CD8-positive, alpha-beta T cell (primary cell): ENCODE measurements at regions of chr16 and their contacts with region 1.

Region 1: DNA sequence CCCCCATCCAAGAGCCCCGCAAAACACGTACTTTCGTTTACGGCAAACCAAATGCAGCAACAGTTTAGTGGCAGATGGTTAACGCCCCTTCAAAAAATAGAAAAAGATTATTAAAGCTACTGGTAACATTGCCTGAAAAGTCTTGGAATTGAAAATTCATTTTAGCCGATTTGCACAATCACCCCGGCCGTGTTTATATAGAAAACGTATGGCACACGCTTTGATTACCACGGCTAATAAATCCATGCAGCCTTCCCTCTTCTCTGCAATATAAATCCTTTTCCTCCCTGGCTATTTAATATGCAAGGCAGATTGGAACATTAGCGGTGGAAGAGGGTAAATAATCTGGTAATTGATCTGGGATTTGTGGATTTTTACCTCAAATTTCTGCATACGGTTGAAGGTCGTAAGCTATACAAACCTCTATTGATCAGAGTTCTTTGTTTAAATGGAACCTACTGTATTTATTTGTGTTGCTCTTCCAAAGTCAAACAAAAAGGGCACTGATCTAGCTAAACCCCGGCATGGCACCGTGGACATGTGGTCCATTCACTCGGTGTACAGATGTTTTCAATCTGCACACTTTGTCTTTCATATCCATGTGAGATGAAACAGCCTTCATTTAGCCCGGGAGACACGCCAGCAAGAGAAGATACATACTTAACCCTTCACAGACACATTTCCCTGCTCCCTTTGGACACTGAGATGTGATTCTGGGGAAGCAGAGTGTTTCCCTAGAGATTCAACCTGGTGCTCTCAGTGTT is 238.1 kb upstream of the MAF start:
- DNase-seq: no peak
- ATAC-seq: no peak
- H3K4me3 ChIP-seq: no peak overlapping the region
- H3K4me3 Mint-ChIP-seq: no peak overlapping the region
- H3K27ac ChIP-seq: no peak overlapping the region
- H3K27ac Mint-ChIP-seq: no peak overlapping the region
- H3K4me1 ChIP-seq: no peaks in the 10 kb centered on the region
- H3K4me1 Mint-ChIP-seq: no peaks in the 10 kb centered on the region
- H3K27me3 ChIP-seq: no peaks in the 10 kb centered on the region
- H3K27me3 Mint-ChIP-seq: no peaks in the 10 kb centered on the region
- CTCF ChIP-seq: no peak

Region 2: GRCh38 chr16:79788949-79789348 is 49.7 kb before region 1 on chr16:
- CTCF ChIA-PET with region 1: no interaction called
- POLR2A ChIA-PET with region 1: no interaction called
- intact Hi-C with region 1: loop called in 1 of 2 experiments (anchors 5 kb)
- DNase-seq: no peak
- ATAC-seq: no peak
- H3K4me3 ChIP-seq: no peak overlapping the region
- H3K4me3 Mint-ChIP-seq: no peak overlapping the region
- H3K27ac ChIP-seq: no peak overlapping the region
- H3K27ac Mint-ChIP-seq: no peak overlapping the region
- H3K4me1 ChIP-seq: no peaks in the 10 kb centered on the region
- H3K4me1 Mint-ChIP-seq: no peaks in the 10 kb centered on the region
- H3K27me3 ChIP-seq: peaks cover 0 to 4% of the 10 kb centered on the region in 2 experiments
- H3K27me3 Mint-ChIP-seq: no peaks in the 10 kb centered on the region
- CTCF ChIP-seq: no peak

Region 3: DNA sequence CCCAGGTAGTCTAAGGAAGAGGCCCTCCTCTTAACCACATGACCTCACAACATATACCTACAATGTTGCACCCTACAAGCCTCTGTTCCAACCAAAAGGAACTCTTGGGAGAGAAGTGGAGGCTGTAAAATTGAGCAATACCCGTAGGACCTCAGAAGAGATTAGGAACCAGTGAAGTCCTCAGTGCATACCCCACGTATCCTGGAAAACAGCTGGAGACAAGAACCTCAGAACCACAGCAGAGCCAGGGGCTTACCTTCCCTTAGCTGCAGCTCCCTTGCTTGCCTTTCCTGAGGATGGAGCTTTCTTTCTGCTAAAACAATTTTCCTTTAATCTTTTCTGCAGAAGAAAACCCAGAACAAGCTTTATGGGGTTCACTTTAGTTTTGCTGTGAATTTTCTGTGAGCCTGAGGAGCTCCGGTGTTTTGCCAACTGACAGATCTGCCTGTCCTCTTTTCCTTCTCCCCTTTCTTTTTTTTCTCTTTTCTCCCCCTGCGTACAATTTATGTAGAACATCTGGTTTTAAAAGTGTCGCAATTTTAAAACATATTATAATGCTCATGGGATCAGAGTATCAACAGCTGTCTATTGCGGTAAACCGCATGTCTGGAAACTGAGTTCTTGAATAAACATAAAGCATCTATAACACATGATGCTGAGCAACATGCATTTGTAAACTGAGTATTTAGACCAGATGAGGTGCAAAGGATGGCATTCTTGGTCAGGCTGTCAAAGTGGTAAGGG is 11.8 kb before region 1 on chr16:
- CTCF ChIA-PET with region 1: no interaction called
- POLR2A ChIA-PET with region 1: no interaction called
- intact Hi-C with region 1: no loop called
- DNase-seq: no peak
- ATAC-seq: no peak
- H3K4me3 ChIP-seq: no peak overlapping the region
- H3K4me3 Mint-ChIP-seq: no peak overlapping the region
- H3K27ac ChIP-seq: no peak overlapping the region
- H3K27ac Mint-ChIP-seq: no peak overlapping the region
- H3K4me1 ChIP-seq: no peaks in the 10 kb centered on the region
- H3K4me1 Mint-ChIP-seq: no peaks in the 10 kb centered on the region
- H3K27me3 ChIP-seq: peaks cover 0 to 2% of the 10 kb centered on the region in 2 experiments
- H3K27me3 Mint-ChIP-seq: no peaks in the 10 kb centered on the region
- CTCF ChIP-seq: no peak